ENCODE measurements at regions of chr6 and their contacts with region 1.

Region 1: GRCh38 chr6:3108746-3109414 is 9.6 kb upstream of the BPHL start:
- DNase-seq: no peak
- ATAC-seq: no peak
- H3K4me3 ChIP-seq: no peak overlapping the region
- H3K27ac ChIP-seq: no peak overlapping the region
- H3K4me1 ChIP-seq: no peaks in the 10 kb centered on the region
- H3K27me3 ChIP-seq: no peaks in the 10 kb centered on the region
- CTCF ChIP-seq: no peak

Region 2: DNA sequence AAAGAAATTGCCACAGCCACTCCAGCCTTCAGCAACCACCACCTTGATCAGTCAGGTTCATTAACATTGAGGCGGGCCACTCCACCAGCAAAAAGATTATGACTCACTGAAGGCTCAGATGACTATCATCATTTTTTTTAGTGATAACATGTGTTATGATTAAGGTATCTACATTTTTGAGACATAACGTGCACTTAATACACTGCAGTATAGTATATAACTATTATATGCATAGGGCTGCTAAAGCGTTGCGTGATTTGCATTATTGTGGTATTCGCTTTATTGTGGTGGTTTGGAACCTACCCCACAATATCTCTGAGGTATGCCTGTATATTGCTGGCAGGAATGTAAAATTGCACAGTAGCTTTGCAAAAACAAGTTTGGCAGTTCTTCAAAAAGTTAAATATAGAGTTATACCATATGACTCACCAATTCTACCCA is 47.4 kb before region 1 on chr6:
- CTCF ChIA-PET with region 1: no interaction called
- POLR2A ChIA-PET with region 1: interaction called, 14 read pairs
- intact Hi-C with region 1: no loop called
- DNase-seq: peak; percentile 93
- ATAC-seq: peak; percentile 18
- H3K4me3 ChIP-seq: no peak overlapping the region
- H3K27ac ChIP-seq: no peak overlapping the region
- H3K4me1 ChIP-seq: peaks cover 14% of the 10 kb centered on the region
- H3K27me3 ChIP-seq: no peaks in the 10 kb centered on the region
- CTCF ChIP-seq: no peak

Region 3: DNA sequence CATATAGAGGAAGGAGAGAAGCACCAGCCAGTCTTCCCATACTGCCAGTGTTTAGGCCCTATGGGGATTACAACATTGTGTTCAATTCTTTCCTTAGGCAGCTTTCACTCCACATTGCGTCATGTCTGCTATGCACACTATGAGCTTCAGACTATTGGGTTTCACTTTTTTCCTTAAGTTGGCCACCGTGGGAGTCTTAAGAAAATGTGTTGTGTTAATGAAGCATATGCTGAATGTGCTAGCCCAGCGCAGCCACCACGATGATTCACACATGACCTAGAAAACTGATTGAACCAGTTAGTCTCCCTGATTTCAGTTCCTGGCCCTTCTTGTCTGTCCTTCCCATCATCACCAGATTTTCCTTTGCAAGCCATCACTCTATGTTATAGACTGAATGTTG is 97.0 kb after region 1 on chr6:
- CTCF ChIA-PET with region 1: no interaction called
- POLR2A ChIA-PET with region 1: no interaction called
- intact Hi-C with region 1: no loop called
- DNase-seq: peak; percentile 81
- ATAC-seq: no peak
- H3K4me3 ChIP-seq: no peak overlapping the region
- H3K27ac ChIP-seq: peak overlapping the region; percentile 27
- H3K4me1 ChIP-seq: peaks cover 27% of the 10 kb centered on the region
- H3K27me3 ChIP-seq: no peaks in the 10 kb centered on the region
- CTCF ChIP-seq: no peak

Region 4: GRCh38 chr6:3627956-3628835 is 519.3 kb after region 1 on chr6:
- CTCF ChIA-PET with region 1: no interaction called
- POLR2A ChIA-PET with region 1: no interaction called
- intact Hi-C with region 1: no loop called
- DNase-seq: no peak
- ATAC-seq: no peak
- H3K4me3 ChIP-seq: no peak overlapping the region
- H3K27ac ChIP-seq: no peak overlapping the region
- H3K4me1 ChIP-seq: no peaks in the 10 kb centered on the region
- H3K27me3 ChIP-seq: no peaks in the 10 kb centered on the region
- CTCF ChIP-seq: no peak